Activated CD4-positive, alpha-beta T cell treated with anti-CD3 and anti-CD28 coated beads for 36 hours (primary cell): ENCODE measurements at regions of chr9 and their contacts with region 1.

Region 1: GRCh38 chr9:128656416-128657343 is at the start of gene DYNC2I2:
- DNase-seq: peak; percentile 99
- ATAC-seq: peak; percentile 98
- H3K4me3 Mint-ChIP-seq: peak within 1 kb of the TSS; percentile 82
- H3K27ac Mint-ChIP-seq: peak within 1 kb of the TSS; percentile 100
- H3K4me1 Mint-ChIP-seq: peaks cover 6% of the 10 kb centered on the region
- H3K27me3 Mint-ChIP-seq: no peaks in the 10 kb centered on the region
- total RNA-seq, gene DYNC2I2: 26.7 to 35.7 TPM

Region 2: DNA sequence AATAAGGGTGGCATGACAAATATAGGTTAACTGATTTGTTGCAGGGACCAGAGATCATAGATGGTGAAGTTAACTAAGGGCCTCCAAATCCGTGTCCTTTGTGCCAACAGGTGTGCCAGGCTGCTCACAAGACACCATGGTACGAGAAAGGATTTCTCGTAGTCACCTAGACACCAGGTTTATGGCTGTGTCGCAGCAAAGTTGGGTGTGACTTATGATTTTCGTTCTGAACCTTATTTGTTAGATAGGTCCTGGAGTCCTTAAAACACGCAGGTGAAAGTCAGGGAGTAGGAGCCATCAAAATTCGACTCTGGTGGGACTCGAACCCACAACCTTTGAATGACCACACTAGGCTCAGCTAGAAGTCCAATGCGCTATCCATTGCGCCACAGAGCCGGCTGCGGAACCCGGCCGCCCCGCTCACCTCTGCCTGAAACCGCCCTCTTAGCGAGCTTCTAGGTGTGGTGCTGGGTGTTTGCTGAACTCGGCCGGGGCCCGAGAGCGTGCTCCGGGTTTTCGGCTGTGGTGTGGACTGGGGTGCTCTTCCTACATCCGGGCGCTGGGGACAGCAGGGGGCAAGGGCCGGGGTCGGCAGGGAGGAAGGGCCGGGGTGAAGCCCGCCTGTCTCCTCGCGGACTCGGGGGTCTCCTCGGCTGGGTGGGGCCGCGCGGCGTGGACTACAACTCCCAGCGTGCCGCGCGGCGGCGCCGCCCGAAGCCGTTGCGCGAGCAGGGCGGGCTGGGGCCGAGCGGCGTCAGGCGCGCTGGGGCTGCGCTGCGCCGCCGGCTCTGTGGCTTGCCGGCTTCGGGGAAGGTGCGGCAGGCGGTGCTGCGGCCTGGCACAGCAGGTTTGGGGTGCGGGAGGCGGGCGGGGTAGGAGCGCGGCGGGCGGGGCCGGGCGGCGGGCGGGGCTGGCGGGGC is 316.6 kb before region 1 on chr9 and contains the start of gene SLC27A4:
- CTCF ChIA-PET with region 1: no interaction called
- POLR2A ChIA-PET with region 1: no interaction called
- intact Hi-C with region 1: loop called in 1 of 2 experiments (anchors 1 kb)
- DNase-seq: peak; percentile 88
- ATAC-seq: peak; percentile 93
- H3K4me3 Mint-ChIP-seq: peak within 1 kb of the TSS; percentile 88
- H3K27ac Mint-ChIP-seq: peak within 1 kb of the TSS; percentile 83
- H3K4me1 Mint-ChIP-seq: peaks cover 6% of the 10 kb centered on the region
- H3K27me3 Mint-ChIP-seq: no peaks in the 10 kb centered on the region
- total RNA-seq, gene SLC27A4: 8.4 to 10.2 TPM

Region 3: DNA sequence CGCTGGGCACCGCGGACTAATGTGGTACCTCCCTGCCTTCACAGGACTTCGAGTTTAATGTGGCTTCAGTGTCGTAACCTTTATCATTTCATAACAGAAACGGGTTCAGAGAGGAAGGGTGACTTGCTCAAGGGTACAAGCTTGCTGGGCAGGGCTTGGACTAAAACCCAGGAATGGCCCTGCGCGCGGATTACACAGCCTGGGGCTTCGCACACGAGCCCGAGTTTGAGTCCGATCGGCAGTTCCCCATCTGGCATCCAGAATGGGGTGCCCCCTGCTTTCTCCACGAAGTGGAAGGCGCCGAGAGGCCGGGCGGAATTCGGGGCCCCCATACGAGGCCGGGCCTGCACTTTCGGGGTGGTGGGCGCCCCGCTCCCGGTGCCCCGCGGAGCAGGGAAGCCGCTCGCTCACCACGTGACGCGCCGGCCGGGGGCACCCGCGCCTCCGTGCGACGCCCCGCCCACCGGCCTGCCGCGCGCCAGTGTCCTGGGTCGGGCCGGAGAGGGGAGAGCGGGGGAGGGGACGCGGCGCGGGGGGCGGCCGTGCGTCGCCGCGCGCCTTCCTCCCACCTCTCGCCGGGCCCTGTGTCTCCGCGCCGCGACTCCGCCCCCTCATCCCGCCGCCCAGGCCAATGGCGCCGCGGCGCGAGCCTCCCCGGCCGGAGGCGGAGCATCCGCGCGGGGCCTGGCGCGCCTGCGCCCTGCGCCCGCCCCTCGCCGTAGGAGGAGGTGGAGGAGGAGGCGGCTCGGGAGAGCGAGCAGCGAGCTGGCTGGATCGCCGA is 32.0 kb after region 1 on chr9 and contains the start of gene SET:
- CTCF ChIA-PET with region 1: interaction called, 3 read pairs
- POLR2A ChIA-PET with region 1: interaction called, 7 read pairs
- intact Hi-C with region 1: loop called (anchors 1 to 2 kb)
- DNase-seq: peak; percentile 96
- ATAC-seq: peak; percentile 71
- H3K4me3 Mint-ChIP-seq: peak within 1 kb of the TSS; percentile 99
- H3K27ac Mint-ChIP-seq: peak within 1 kb of the TSS; percentile 94
- H3K4me1 Mint-ChIP-seq: peaks cover 61% of the 10 kb centered on the region
- H3K27me3 Mint-ChIP-seq: no peaks in the 10 kb centered on the region
- total RNA-seq, gene SET: 673 to 682 TPM

Region 4: GRCh38 chr9:128771745-128772519 is 115.3 kb after region 1 on chr9 and contains the start of gene ZER1:
- CTCF ChIA-PET with region 1: no interaction called
- POLR2A ChIA-PET with region 1: no interaction called
- intact Hi-C with region 1: loop called in 1 of 2 experiments (anchors 1 kb)
- DNase-seq: peak; percentile 97
- ATAC-seq: peak; percentile 94
- H3K4me3 Mint-ChIP-seq: peak within 1 kb of the TSS; percentile 82
- H3K27ac Mint-ChIP-seq: peak within 1 kb of the TSS; percentile 86
- H3K4me1 Mint-ChIP-seq: peaks cover 18% of the 10 kb centered on the region
- H3K27me3 Mint-ChIP-seq: no peaks in the 10 kb centered on the region
- total RNA-seq, gene ZER1: 17.1 to 19.3 TPM

Region 5: DNA sequence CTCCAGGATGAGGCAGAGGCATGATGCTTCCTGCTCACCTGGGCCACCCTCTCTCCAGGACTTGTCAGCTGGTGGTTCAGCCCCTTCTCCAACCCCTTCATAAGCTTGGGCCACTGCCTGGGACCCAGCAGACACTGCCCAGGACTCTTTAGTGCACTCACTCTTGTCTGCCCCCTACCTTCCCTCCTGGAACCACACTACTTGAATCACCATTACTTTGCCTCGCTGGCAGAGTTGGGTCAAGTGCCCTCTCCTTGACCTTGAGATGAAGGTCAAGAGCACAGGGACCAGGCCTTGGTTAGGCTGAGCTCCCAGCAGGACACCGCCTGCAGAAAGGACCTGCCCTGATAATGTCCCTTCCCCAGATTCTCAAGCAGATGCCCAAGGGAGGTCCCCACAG is 153.2 kb after region 1 on chr9:
- CTCF ChIA-PET with region 1: no interaction called
- POLR2A ChIA-PET with region 1: no interaction called
- intact Hi-C with region 1: no loop called
- DNase-seq: no peak
- ATAC-seq: no peak
- H3K4me3 Mint-ChIP-seq: no peak overlapping the region
- H3K27ac Mint-ChIP-seq: no peak overlapping the region
- H3K4me1 Mint-ChIP-seq: no peaks in the 10 kb centered on the region
- H3K27me3 Mint-ChIP-seq: no peaks in the 10 kb centered on the region

Region 6: DNA sequence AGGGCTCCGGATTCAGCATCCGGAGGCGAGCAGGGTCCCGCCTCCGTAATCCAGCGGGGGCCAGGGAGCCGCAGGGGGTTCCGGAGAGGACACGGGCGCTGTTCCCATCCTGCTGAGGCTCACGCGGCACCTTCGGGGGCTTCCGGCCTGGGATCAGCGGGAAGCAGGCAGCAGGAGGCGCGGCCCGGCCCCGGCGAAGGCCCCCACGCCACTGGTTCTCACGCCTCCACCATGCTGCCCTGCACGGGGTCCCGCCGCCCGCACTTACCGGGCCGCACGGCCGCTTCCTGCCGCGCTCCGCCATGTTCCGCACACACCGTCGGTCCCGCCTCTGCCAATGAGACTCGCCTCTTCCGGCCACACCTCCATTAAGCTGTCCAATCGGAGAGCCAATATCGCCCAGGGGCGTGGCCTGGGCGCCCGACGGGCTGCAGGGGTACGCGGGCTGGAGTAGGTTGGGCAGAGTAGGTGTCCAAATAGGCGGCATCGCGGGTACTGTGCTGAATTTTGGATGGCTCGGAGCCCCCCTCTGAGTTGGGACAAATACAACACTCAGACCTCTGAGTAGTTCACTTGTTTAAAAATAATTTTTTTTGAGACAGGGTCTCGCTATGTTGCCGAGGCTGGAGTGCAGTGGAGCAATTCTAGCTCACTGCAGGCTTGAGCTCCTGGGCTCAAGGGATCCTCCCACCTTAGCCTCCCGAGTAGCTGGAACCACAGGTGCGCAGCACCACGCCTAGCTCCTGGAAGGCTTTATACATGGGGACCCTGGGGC is 173.0 kb after region 1 on chr9 and contains the start of gene SPOUT1:
- CTCF ChIA-PET with region 1: no interaction called
- POLR2A ChIA-PET with region 1: no interaction called
- intact Hi-C with region 1: loop called in 1 of 2 experiments (anchors 1 kb)
- DNase-seq: peak; percentile 96
- ATAC-seq: peak; percentile 98
- H3K4me3 Mint-ChIP-seq: peak within 1 kb of the TSS; percentile 91
- H3K27ac Mint-ChIP-seq: peak within 1 kb of the TSS; percentile 88
- H3K4me1 Mint-ChIP-seq: peaks cover 23% of the 10 kb centered on the region
- H3K27me3 Mint-ChIP-seq: no peaks in the 10 kb centered on the region
- total RNA-seq, gene SPOUT1: 87.9 to 92.9 TPM